ENCODE measurements at regions of chr7 and their contacts with region 1.

Region 1: GRCh38 chr7:120987683-120988590 is 574 bp upstream of the CPED1 start:
- DNase-seq: peak; percentile 85
- H3K4me3 ChIP-seq: peak overlapping the region; percentile 31
- H3K27ac ChIP-seq: no peak overlapping the region
- H3K4me1 ChIP-seq: peaks cover 7% of the 10 kb centered on the region
- CTCF ChIP-seq: peak; percentile 99

Region 2: DNA sequence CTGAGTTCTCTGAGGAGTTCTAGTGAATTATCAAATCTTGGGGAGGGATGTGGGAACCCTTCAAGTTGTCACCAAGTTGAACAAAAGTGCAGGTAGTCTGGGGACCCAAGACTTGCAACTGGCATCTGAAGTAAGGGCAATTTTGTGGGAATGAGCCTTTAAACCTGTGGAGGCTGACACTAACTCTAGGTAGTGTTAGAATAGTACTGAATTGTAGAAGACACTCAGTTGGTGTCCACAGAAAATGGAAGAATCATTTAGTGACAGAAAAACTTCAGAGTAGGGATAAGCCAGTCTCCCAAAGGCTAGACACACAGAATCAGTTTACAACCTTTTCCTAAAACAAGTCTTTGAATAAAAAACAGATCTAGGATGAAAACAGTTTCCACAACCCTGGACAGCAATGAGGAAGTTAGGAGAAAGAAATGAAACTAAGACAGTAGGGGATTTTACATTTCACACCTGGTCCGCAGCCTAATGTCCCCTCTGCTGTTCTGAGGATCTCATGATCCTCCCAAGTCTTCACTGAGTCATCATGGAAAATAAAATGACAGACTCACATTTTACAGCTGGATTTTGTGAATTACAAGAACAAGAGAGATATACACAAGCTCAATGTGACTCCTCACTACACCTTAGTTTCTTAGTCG is 60.4 kb before region 1 on chr7:
- CTCF ChIA-PET with region 1: no interaction called
- POLR2A ChIA-PET with region 1: no interaction called
- intact Hi-C with region 1: no loop called
- DNase-seq: no peak
- H3K4me3 ChIP-seq: no peak overlapping the region
- H3K27ac ChIP-seq: no peak overlapping the region
- H3K4me1 ChIP-seq: no peaks in the 10 kb centered on the region
- CTCF ChIP-seq: no peak

Region 3: GRCh38 chr7:121081327-121081936 is 93.5 kb after region 1 on chr7:
- CTCF ChIA-PET with region 1: no interaction called
- POLR2A ChIA-PET with region 1: no interaction called
- intact Hi-C with region 1: loop called (anchors 1 kb)
- DNase-seq: peak; percentile 51
- H3K4me3 ChIP-seq: no peak overlapping the region
- H3K27ac ChIP-seq: no peak overlapping the region
- H3K4me1 ChIP-seq: no peaks in the 10 kb centered on the region
- CTCF ChIP-seq: peak; percentile 87

Region 4: GRCh38 chr7:121107923-121108498 is 120.1 kb after region 1 on chr7:
- CTCF ChIA-PET with region 1: no interaction called
- POLR2A ChIA-PET with region 1: interaction called, 3 read pairs
- intact Hi-C with region 1: loop called (anchors 2 kb)
- DNase-seq: peak; percentile 67
- H3K4me3 ChIP-seq: no peak overlapping the region
- H3K27ac ChIP-seq: no peak overlapping the region
- H3K4me1 ChIP-seq: no peaks in the 10 kb centered on the region
- CTCF ChIP-seq: peak; percentile 97

Region 5: DNA sequence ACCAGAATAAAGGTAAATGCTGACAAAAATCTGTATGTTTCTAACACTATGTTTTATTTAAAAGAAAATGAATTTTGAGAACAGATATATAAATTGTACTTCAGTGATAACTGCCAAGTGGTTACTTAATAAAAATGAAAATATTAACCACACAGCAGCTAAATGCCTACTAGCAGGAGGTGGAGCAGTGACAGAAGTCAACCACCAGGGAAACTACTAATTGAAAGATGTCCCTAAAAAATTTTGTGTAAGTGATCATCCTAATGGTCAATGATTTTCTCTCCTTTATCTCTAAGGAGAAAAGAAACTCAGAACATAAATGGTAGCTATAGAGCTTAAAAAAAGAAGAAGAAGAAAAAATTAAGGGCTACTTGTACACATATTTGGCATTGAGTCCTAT is 363.7 kb after region 1 on chr7:
- CTCF ChIA-PET with region 1: no interaction called
- POLR2A ChIA-PET with region 1: no interaction called
- intact Hi-C with region 1: loop called (anchors 10 kb)
- DNase-seq: no peak
- H3K4me3 ChIP-seq: no peak overlapping the region
- H3K27ac ChIP-seq: no peak overlapping the region
- H3K4me1 ChIP-seq: no peaks in the 10 kb centered on the region
- CTCF ChIP-seq: peak; percentile 43